Activated naive CD4-positive, alpha-beta T cell treated with anti-CD3 and anti-CD28 coated beads for 36 hours (primary cell): ENCODE measurements at regions of chr18 and their contacts with region 1.

Region 1: DNA sequence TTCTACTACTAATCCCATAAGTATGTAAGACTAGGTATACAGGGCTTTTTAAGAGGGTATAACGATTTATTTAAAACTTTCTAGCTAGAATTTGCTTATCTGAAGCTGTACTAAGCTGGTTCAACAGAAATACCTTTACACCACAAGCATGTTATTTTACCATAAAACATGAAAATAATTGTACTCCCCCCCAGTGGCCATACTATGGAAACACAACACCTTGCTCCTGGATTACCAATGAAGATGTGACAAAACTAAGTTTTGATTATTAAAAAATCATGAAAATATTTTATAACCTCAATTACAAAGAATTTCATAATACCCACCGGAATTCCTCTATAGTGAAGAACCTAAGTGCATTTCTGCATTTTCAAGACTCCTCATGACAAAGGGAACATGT is 27.3 kb downstream of the LPIN2 start:
- DNase-seq: no peak
- H3K4me3 Mint-ChIP-seq: no peak overlapping the region
- H3K27ac Mint-ChIP-seq: no peak overlapping the region
- H3K4me1 Mint-ChIP-seq: peaks cover 80% of the 10 kb centered on the region
- H3K27me3 Mint-ChIP-seq: no peaks in the 10 kb centered on the region

Region 2: GRCh38 chr18:2337552-2338141 is 648.0 kb before region 1 on chr18:
- CTCF ChIA-PET with region 1: no interaction called
- intact Hi-C with region 1: loop called (anchors 10 kb)
- DNase-seq: peak; percentile 67
- H3K4me3 Mint-ChIP-seq: no peak overlapping the region
- H3K27ac Mint-ChIP-seq: no peak overlapping the region
- H3K4me1 Mint-ChIP-seq: no peaks in the 10 kb centered on the region
- H3K27me3 Mint-ChIP-seq: peaks cover 5% of the 10 kb centered on the region

Region 3: DNA sequence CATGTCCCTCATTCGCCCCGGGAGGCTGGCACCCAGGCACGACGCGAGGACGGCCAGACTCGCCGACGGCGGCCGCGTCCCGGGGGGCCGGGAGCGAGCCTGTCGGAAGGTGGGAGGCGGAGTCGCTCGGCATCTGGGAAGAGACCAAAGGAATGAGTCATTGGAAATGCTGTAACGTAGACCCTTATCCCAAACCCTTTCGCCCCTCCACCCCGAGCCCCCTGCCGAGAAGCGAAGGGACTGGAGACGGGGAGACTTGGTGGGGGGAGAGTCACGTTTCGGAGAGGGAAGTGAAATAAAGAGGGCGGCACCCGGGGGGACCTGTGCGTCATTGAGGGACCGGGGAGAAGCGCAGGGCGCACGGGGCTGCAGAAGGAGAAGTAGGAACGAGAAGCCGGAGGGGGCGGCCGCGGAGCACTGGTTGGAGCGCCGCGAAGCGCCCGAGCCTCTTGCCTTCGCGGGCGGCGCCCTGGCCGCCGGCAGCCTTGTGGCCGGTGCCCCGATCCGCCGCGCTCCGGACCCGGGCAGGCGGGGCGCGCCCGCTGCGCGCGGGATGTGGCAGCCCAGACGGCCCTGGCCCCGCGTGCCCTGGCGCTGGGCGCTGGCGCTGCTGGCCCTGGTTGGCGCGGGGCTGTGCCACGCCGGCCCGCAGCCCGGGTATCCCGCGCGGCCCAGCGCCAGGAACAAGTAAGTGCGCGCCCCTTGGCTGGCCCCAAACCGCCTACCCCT is 138.8 kb before region 1 on chr18 and contains the start of gene EMILIN2:
- CTCF ChIA-PET with region 1: no interaction called
- intact Hi-C with region 1: loop called (anchors 5 kb)
- DNase-seq: peak; percentile 64
- H3K4me3 Mint-ChIP-seq: peak within 1 kb of the TSS; percentile 83
- H3K27ac Mint-ChIP-seq: peak within 1 kb of the TSS; percentile 61
- H3K4me1 Mint-ChIP-seq: peaks cover 18% of the 10 kb centered on the region
- H3K27me3 Mint-ChIP-seq: peaks cover 31% of the 10 kb centered on the region
- total RNA-seq, gene EMILIN2: 12.2 to 13.2 TPM

Region 4: GRCh38 chr18:2948038-2948437 is 37.6 kb before region 1 on chr18:
- CTCF ChIA-PET with region 1: interaction called, 90 read pairs
- intact Hi-C with region 1: no loop called
- DNase-seq: no peak
- H3K4me3 Mint-ChIP-seq: no peak overlapping the region
- H3K27ac Mint-ChIP-seq: no peak overlapping the region
- H3K4me1 Mint-ChIP-seq: peaks cover 43% of the 10 kb centered on the region
- H3K27me3 Mint-ChIP-seq: no peaks in the 10 kb centered on the region

Region 5: GRCh38 chr18:2971741-2972552 is 13.7 kb before region 1 on chr18:
- CTCF ChIA-PET with region 1: interaction called, 15 read pairs
- intact Hi-C with region 1: loop called (anchors 1 kb)
- DNase-seq: peak; percentile 83
- H3K4me3 Mint-ChIP-seq: peak overlapping the region; percentile 77
- H3K27ac Mint-ChIP-seq: peak overlapping the region; percentile 100
- H3K4me1 Mint-ChIP-seq: peaks cover 86% of the 10 kb centered on the region
- H3K27me3 Mint-ChIP-seq: no peaks in the 10 kb centered on the region